Activated CD4-positive, alpha-beta T cell treated with anti-CD3 and anti-CD28 coated beads for 36 hours (primary cell): ENCODE measurements at regions of chr10 and their contacts with region 1.

Region 1: DNA sequence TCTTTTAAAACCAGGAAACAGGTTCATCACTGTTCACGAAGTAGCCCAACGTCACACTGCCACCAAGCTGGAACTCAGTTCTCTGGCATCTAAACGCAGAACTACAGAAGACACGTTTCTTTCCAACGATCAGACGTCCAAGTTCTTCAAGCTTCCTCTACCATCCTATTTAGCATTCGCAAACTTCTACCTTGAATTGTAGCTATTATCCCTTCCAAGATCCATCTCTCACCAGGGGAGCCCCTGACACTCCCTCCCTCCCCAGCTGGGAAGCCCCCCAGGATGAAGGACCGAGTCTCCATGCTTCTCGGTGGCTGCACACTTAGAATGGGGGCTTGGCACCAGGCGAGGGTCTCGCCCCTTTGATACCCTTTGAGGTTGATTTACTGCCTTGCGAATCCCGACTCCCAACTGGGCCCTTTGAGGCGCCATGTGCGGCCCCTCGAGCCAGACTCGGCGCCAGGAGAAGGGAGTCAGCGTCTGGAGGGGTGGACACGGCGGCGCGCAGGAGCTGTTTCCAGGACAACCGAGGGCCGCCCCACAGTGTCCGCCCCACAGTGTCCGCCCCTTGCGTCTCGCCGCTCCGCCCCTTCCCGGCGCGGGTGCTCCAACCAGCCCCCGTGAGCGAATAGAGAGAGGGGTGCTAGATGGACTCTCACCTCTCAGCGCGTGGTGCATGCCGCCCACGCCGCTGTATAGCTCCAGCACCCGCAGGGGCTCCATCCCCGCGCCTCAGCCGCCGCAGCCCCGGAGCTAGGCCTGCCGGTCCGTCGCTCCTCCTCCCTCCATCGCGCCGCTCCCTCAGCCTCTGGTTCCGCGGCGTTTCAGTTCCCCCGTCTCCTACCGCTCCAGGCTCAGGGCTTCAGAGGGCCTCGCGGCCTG is at the start of gene TRDMT1:
- DNase-seq: peak; percentile 85
- ATAC-seq: peak; percentile 91
- H3K4me3 Mint-ChIP-seq: peak within 1 kb of the TSS; percentile 86
- H3K27ac Mint-ChIP-seq: peak within 1 kb of the TSS; percentile 89
- H3K4me1 Mint-ChIP-seq: peaks cover 46% of the 10 kb centered on the region
- H3K27me3 Mint-ChIP-seq: no peaks in the 10 kb centered on the region
- total RNA-seq, gene TRDMT1: 6.6 to 11.6 TPM

Region 2: GRCh38 chr10:17144757-17145156 is 56.4 kb before region 1 on chr10:
- CTCF ChIA-PET with region 1: no interaction called
- POLR2A ChIA-PET with region 1: interaction called, 4 read pairs
- intact Hi-C with region 1: loop called in 1 of 2 experiments (anchors 2 kb)
- DNase-seq: peak; percentile 80
- ATAC-seq: peak; percentile 96
- H3K4me3 Mint-ChIP-seq: no peak overlapping the region
- H3K27ac Mint-ChIP-seq: peak overlapping the region; percentile 51
- H3K4me1 Mint-ChIP-seq: peaks cover 31% of the 10 kb centered on the region
- H3K27me3 Mint-ChIP-seq: no peaks in the 10 kb centered on the region

Region 3: DNA sequence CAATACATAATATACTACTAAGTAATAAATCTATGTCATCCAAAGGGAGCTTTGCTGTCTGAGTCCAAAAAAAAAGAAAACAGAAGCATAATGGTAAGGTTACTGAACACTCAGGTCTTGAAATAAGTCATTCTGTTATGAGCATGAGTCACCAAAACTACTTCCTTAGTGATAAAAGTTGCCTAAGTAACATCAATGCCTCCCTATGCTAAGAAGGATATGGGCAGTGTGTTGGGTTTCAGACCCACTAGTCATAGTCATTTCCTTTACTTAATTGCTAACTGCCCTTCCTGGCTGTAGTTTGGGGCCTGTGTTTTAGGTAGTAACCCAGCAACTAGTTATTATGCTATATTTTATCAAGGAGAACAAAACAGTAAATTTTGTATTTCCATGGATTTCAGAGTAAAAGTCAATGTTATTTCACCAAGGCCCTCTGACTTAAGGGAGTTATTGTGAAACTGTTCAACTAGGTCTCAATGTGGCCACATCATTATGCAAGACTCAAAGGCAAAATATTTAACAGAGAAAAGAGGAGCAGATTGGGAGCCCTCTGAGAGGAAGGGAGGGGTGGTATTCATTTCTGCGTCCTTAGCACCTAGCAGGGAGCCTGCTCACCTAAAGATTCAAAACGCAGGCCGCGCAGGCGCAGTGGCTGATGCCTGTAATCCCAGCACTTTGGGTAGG is 15.2 kb after region 1 on chr10:
- CTCF ChIA-PET with region 1: interaction called, 18 read pairs
- POLR2A ChIA-PET with region 1: interaction called, 3 read pairs
- intact Hi-C with region 1: loop called (anchors 1 kb)
- DNase-seq: peak; percentile 48
- ATAC-seq: peak; percentile 96
- H3K4me3 Mint-ChIP-seq: no peak overlapping the region
- H3K27ac Mint-ChIP-seq: peak overlapping the region; percentile 85
- H3K4me1 Mint-ChIP-seq: peaks cover 39% of the 10 kb centered on the region
- H3K27me3 Mint-ChIP-seq: no peaks in the 10 kb centered on the region

Region 4: GRCh38 chr10:17316488-17317170 is 115.5 kb after region 1 on chr10:
- CTCF ChIA-PET with region 1: no interaction called
- POLR2A ChIA-PET with region 1: no interaction called
- intact Hi-C with region 1: no loop called
- DNase-seq: no peak
- ATAC-seq: no peak
- H3K4me3 Mint-ChIP-seq: no peak overlapping the region
- H3K27ac Mint-ChIP-seq: no peak overlapping the region
- H3K4me1 Mint-ChIP-seq: no peaks in the 10 kb centered on the region
- H3K27me3 Mint-ChIP-seq: no peaks in the 10 kb centered on the region

Region 5: DNA sequence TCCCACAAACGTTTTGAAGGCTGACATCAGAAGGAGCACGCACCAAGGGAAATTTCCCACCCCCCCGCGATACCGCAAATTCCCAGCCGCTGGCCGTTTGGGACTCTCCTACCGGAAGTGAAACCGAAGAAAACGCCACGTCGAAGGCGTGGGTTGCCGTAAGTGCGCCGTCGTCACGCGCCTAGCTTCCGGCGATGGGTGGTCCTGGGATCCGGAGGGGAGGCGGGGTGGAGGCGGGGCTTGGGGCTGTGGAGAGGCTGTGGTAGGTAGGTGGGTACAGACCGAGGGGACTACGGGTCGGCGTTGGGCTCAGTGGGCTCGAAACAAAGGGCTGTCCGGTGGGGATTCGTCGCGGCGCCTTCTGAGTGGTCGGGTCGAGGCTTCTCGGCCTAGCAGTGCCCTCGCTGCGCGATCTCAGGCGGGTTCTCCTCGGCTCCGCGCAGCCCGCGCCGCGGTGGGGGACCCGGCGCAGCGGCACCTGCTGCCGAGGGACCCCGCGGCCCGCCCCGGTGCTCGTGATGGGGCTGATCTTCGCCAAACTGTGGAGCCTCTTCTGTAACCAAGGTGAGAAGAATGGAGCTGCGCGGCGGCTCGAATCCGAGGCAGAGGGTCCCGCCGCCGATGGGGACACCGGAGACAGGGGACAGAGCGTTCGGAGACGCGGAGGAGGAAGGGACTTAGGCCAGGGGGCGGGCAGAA is 1458.1 kb after region 1 on chr10 and contains the start of gene ARL5B:
- CTCF ChIA-PET with region 1: no interaction called
- POLR2A ChIA-PET with region 1: no interaction called
- intact Hi-C with region 1: loop called in 1 of 2 experiments (anchors 10 kb)
- DNase-seq: peak; percentile 98
- ATAC-seq: peak; percentile 95
- H3K4me3 Mint-ChIP-seq: peak within 1 kb of the TSS; percentile 99
- H3K27ac Mint-ChIP-seq: peak within 1 kb of the TSS; percentile 98
- H3K4me1 Mint-ChIP-seq: peaks cover 39% of the 10 kb centered on the region
- H3K27me3 Mint-ChIP-seq: no peaks in the 10 kb centered on the region
- total RNA-seq, gene ARL5B: 11.3 to 12.0 TPM